Right ventricle myocardium superior (tissue), 1 donor: ENCODE measurements at regions of chr14 and their contacts with region 1.

Region 1: DNA sequence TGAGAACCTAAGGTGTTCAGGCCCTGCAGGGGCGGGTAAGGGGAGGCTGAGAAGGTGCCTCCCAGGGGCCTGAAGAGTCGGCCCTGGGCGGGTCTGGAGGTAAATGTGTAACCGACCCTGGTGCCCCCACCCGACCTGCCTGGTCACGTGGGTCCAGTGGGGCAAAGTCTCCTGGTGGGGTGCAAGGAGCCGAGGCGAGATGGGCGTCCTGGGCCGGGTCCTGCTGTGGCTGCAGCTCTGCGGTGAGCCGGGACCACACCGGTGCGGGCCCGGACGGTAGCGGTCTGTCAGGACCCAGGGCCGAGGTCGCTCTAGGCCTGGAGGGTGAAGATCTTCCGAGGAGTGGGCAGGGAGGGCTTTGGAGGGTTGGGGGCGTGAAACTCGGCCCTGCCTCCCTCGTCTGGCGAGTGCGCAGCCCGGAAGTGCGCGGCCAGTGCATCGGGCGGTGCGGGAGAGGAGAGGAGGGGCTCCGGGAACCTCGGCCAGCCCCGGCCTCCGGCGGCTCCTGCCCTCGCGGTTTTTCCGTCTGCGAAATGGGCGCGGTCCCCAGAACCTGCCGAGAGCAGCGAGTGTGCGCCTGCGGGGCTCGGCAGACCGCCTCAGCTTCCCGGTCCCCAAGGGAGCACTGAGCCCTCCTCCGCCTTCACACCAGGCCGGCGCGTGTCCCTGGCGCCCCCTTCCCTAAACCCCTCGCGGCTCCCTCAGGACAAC is at the start of gene AMN:
- DNase-seq: no peak
- ATAC-seq: peak; percentile 16
- total RNA-seq, gene AMN: not detected

Region 2: GRCh38 chr14:102694530-102695166 is 228.0 kb before region 1 on chr14:
- intact Hi-C with region 1: loop called (anchors 5 kb)
- DNase-seq: no peak
- ATAC-seq: peak; percentile 82

Region 3: DNA sequence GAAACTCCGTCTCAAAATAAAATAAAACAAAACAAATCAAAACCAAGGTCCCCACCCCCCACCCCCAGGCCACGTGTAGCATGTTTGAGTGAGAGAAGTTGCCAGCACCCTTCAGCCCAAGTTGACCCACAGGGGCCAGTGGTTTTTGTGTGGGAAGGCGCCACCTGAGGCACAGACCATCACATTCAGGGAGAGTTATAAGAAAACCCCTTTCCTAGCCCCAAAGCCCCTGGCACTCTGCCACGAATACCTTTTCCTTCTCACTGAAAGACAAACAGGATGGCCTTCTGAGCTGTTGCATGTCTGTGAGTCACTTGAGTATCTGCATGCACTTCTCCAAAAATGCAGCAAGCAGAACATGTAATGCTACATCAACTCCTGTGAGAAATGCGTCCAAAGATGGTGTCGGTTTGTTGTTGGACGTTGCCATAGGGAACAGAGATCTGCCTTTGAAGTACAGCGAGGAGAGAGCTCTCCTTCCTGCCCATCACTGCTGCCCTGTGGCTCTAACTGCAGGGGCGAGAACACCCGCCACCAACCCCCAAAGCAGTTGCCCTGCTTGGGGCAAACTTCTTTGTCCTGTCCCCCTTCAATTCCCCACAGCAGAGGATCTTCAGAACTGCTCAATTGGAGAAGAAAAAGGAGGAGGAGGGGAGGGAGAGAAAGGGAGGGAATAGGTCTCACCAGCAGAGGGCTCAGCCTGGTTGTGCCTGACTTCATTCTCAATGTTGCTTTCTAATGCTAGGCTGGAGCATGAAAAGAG is 148.1 kb before region 1 on chr14:
- intact Hi-C with region 1: loop called (anchors 5 kb)
- DNase-seq: no peak
- ATAC-seq: peak; percentile 63